ENCODE measurements at regions of chr11 and their contacts with region 1.

Region 1: GRCh38 chr11:12430955-12431354 is 53.6 kb downstream of the PARVA start:
- DNase-seq: peak; percentile 91
- ATAC-seq: peak; percentile 65
- H3K4me3 ChIP-seq: no peak overlapping the region
- H3K27ac ChIP-seq: peak overlapping the region; percentile 71
- H3K4me1 ChIP-seq: peaks cover 40% of the 10 kb centered on the region
- H3K27me3 ChIP-seq: no peaks in the 10 kb centered on the region
- CTCF ChIP-seq: no peak
- POLR2A ChIP-seq: no peak
- RAD21 ChIP-seq: no peak

Region 2: DNA sequence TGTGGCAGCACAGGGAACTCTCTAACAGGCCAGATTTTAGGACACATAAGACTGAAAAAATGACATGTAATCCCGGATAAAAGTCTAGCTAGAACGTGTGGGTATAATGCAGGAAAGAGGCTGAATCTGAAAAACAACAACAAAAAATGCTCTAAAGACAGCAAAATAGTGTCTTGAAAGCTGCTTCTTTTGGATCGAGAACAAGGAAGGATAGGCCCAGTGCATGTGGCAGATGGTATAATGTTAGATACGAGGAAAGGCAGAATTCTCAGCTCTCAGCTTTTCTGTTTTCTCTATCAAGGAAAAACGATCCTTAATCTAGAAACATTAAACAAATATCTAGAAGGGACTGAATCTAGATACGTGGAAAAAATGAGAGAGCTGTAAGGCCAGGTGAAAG is 87.4 kb before region 1 on chr11:
- CTCF ChIA-PET with region 1: no interaction called
- POLR2A ChIA-PET with region 1: no interaction called
- dilution Hi-C with region 1: no loop called
- in situ Hi-C with region 1: no loop called
- intact Hi-C with region 1: no loop called
- DNase-seq: no peak
- ATAC-seq: no peak
- H3K4me3 ChIP-seq: no peak overlapping the region
- H3K27ac ChIP-seq: no peak overlapping the region
- H3K4me1 ChIP-seq: no peaks in the 10 kb centered on the region
- H3K27me3 ChIP-seq: no peaks in the 10 kb centered on the region
- CTCF ChIP-seq: no peak
- POLR2A ChIP-seq: no peak
- RAD21 ChIP-seq: no peak

Region 3: GRCh38 chr11:12377824-12378593 is 52.9 kb before region 1 on chr11:
- CTCF ChIA-PET with region 1: no interaction called
- POLR2A ChIA-PET with region 1: no interaction called
- dilution Hi-C with region 1: no loop called
- in situ Hi-C with region 1: no loop called
- intact Hi-C with region 1: loop called (anchors 2 kb)
- DNase-seq: peak; percentile 71
- ATAC-seq: peak; percentile 73
- H3K4me3 ChIP-seq: peak overlapping the region; percentile 96
- H3K27ac ChIP-seq: peak overlapping the region; percentile 100
- H3K4me1 ChIP-seq: peaks cover 15% of the 10 kb centered on the region
- H3K27me3 ChIP-seq: no peaks in the 10 kb centered on the region
- CTCF ChIP-seq: peak; percentile 36
- POLR2A ChIP-seq: peak; percentile 82
- RAD21 ChIP-seq: 0 out of 2 replicates have a peak, but pooled peaks have one; percentile 15

Region 4: GRCh38 chr11:14249121-14249963 is 1818.4 kb after region 1 on chr11:
- CTCF ChIA-PET with region 1: no interaction called
- POLR2A ChIA-PET with region 1: no interaction called
- dilution Hi-C with region 1: no loop called
- in situ Hi-C with region 1: no loop called
- intact Hi-C with region 1: no loop called
- DNase-seq: peak; percentile 53
- ATAC-seq: peak; percentile 56
- H3K4me3 ChIP-seq: no peak overlapping the region
- H3K27ac ChIP-seq: no peak overlapping the region
- H3K4me1 ChIP-seq: peaks cover 2% of the 10 kb centered on the region; the same call in 1 of the 2 replicates
- H3K27me3 ChIP-seq: peaks cover 49% of the 10 kb centered on the region
- CTCF ChIP-seq: peak; percentile 92
- POLR2A ChIP-seq: 0 out of 2 replicates have a peak, but pooled peaks have one; percentile 23
- RAD21 ChIP-seq: peak; percentile 95